ENCODE measurements at regions of chr7 and their contacts with region 1.

Region 1: GRCh38 chr7:111763221-111763801 is 201.0 kb upstream of the IMMP2L start:
- DNase-seq: no peak
- H3K4me3 ChIP-seq: no peak overlapping the region
- H3K27ac ChIP-seq: no peak overlapping the region
- H3K4me1 ChIP-seq: peaks cover 0 to 13% (median 4%) of the 10 kb centered on the region in 4 donors
- H3K27me3 ChIP-seq: no peaks in the 10 kb centered on the region
- CTCF ChIP-seq: peak; percentile 44 to 59 (median 50)
- EP300 ChIP-seq: no peak
- POLR2A ChIP-seq: no peak

Region 2: DNA sequence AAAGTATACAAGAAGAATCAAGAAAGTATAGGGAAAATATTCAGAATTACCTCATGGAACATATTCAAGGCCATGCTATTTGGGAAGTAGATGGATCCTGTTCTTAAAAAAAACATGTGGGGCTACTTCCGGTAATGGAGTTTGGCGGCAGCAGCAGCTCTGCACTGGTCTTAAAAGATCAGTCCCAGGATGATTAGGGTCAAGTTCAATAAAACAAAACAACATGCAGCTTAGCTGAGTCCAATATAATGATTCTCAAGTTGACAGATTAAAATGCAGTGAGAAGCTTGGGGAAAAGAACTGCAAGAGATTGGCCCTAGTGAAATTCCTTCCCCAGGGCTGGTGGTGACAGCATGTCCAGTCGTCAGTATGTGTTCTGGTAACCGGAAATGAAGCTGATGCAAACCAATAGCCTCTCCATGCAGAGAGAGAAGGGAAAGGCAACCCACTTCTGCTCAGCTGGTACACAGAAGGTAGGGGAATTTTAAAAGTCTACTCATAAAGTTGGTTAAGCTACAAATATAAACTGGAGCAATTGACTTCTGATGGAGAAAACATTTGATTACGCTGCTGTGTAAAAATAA is 104.1 kb after region 1 on chr7:
- intact Hi-C with region 1: loop called (anchors 10 kb)
- DNase-seq: peak; percentile 19
- H3K4me3 ChIP-seq: no peak overlapping the region
- H3K27ac ChIP-seq: no peak overlapping the region
- H3K4me1 ChIP-seq: peaks cover 0 to 21% (median 4%) of the 10 kb centered on the region in 4 donors
- H3K27me3 ChIP-seq: no peaks in the 10 kb centered on the region
- CTCF ChIP-seq: no peak
- EP300 ChIP-seq: no peak
- POLR2A ChIP-seq: no peak